GM23248 (cell line): ENCODE measurements at regions of chr1 and their contacts with region 1.

Region 1: DNA sequence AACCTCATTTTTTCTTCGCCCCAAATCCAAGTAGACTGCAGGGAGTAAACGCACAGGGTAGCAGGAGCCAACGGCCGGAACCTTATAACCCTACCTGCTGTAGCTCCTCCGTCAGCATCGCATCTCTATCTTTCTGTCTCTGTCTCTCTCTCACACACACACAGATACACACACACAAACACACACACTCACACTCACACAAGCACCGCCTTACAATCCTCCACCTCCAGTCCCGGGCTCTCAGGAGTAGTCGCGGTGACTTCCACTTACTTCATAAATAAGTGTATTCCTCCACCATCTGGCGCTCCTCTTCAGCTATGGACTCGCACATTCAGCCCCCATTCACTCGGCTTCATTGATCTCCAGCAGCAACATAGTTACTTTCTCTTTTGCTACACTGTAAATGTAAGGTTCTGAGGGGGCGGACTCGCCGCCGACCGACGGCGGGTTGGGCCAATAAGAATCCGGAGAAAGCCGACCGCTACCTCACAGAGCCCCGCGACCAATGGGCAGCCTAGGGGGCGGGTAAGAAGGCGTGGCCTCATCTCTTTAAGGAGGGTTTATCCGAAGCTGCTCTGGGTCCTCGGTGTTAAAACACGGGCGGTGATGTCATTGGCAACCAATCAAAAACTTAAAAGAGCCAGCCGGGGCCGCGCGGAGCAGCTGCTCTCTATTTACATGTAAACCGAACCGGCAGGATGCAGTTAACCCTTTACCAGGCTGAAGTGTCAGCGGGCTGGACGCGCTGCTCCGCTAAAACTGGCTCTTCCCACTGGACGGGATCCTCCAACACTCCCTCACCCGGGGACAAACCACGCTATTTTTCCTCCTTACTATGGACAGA is at the start of gene DUSP10:
- DNase-seq: peak; percentile 100
- H3K4me3 ChIP-seq: peak within 1 kb of the TSS; percentile 94
- H3K27ac ChIP-seq: peak within 1 kb of the TSS; percentile 84
- H3K4me1 ChIP-seq: peaks cover 14% of the 10 kb centered on the region; the same call in 1 of the 2 replicates
- H3K27me3 ChIP-seq: no peaks in the 10 kb centered on the region
- total RNA-seq, gene DUSP10: 10.5 and 19.3 TPM in 2 replicates

Region 2: DNA sequence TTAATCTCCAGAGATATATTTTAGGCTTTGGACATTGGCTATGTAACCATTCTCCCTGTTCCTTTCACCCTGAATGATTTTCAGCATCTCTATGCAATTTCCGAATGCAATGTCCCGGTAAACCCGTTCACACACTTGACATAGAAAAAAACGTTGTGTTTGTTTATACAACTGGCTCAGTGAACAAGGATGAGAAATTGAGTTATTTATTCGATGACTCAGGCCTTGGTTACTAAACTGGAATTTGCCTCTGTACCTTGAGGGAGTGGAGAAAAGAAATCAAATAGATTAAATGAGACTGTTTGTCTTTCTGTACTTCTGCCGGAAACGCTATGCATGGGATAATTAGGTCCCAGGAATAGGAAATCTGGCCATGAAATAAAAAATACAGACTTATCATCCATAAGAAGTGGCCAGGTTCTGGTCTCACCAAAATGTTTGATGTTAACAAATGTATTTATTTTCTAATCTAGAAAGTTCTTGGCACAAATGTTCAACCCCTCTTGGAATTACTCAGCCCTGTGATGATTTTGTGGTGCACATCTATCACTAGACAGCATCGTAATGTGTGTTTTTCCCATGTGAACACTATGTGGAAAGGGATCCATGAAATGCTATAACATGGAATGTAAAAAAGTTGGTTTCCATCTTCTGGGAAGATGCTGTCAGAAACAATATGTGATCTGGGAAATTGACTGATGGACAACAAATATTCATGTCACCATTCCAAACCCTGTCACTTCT is 254.0 kb before region 1 on chr1:
- in situ Hi-C with region 1: loop called (anchors 10 kb)
- DNase-seq: peak; percentile 68
- H3K4me3 ChIP-seq: no peak overlapping the region
- H3K27ac ChIP-seq: no peak overlapping the region
- H3K4me1 ChIP-seq: peaks cover 9% of the 10 kb centered on the region
- H3K27me3 ChIP-seq: no peaks in the 10 kb centered on the region

Region 3: DNA sequence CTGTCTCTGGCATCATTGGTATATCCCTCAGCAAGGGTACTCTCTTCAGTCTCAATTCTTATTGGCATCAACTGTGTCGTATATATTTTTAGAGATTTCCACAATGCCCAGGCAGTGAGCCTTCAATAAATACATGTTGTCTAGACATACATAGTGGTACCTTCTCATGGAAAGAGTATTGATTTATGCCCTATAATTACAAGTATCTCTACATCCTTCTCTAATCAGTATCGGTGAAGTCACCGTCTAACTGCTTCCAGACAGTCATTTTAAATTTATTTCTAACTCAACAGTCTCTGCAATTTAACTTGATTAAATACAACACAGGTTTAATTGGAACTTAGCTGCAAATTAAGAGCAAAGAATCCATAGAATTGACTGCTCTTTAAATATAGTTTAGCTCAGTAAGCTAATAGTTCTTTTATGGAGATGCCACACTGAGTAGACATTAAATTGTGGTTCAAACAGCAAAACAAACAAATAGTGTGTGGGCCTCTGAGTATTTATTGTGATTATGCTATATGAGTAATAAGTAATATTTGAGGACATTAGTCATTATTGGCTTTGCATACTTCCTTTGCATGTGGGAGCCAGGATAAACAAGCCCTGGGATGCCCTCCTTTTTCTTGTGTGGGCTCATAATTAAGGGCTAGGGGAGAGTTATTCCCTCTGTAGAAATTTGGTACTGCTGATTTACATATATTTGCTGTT is 126.8 kb after region 1 on chr1:
- in situ Hi-C with region 1: loop called (anchors 10 kb)
- DNase-seq: peak; percentile 88
- H3K4me3 ChIP-seq: peak overlapping the region; percentile 48
- H3K27ac ChIP-seq: peak overlapping the region; percentile 91
- H3K4me1 ChIP-seq: peaks cover 41% of the 10 kb centered on the region
- H3K27me3 ChIP-seq: no peaks in the 10 kb centered on the region

Region 4: DNA sequence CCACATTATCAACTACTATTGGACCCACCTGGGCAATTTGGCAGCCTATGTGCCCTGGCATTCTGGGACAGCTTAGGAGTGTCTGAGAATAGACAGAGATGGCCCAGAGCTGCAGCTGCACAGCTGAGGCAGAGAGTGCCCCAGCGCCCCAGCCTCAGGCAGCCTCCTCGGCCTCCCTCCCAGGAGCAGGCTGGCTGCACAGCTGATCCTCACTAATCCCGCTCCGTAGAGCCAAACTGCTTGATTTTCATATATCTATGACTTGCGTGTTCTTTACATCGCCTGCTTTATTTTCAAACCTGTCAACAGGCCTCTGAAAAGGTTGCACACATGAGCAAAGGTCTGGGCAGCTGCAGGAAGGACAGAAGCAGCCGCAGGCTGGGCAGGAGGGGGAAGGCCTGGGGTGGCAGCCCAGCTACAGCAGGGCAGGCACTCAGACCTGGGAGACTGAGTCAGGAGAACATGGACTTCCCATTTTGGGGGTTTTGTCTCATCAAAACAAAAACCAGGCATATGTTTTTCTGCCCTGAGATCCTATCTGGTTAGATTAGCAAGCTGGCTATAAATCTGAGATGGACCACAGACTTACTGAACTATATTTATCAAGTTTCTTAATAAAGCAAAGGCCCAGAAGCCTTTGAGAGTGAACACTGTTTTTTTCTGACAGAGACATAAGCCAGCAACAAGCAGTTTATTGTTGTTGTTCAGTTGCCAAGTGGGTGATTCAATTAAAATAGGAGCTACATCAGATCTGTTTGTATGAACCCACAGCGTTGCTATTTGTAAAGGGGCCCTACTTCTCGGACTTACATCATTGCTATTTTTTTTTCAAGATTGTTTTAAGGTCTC is 301.7 kb after region 1 on chr1:
- in situ Hi-C with region 1: no loop called
- DNase-seq: peak; percentile 93
- H3K4me3 ChIP-seq: no peak overlapping the region
- H3K27ac ChIP-seq: peak overlapping the region; percentile 70
- H3K4me1 ChIP-seq: peaks cover 26% of the 10 kb centered on the region
- H3K27me3 ChIP-seq: no peaks in the 10 kb centered on the region

Region 5: GRCh38 chr1:222167111-222167510 is 425.2 kb after region 1 on chr1:
- in situ Hi-C with region 1: loop called (anchors 10 kb)
- DNase-seq: peak; percentile 98
- H3K4me3 ChIP-seq: 0 out of 2 replicates have a peak overlapping the region, but pooled peaks have one; percentile 2
- H3K27ac ChIP-seq: peak overlapping the region; percentile 75
- H3K4me1 ChIP-seq: peaks cover 22% of the 10 kb centered on the region
- H3K27me3 ChIP-seq: no peaks in the 10 kb centered on the region

Region 6: DNA sequence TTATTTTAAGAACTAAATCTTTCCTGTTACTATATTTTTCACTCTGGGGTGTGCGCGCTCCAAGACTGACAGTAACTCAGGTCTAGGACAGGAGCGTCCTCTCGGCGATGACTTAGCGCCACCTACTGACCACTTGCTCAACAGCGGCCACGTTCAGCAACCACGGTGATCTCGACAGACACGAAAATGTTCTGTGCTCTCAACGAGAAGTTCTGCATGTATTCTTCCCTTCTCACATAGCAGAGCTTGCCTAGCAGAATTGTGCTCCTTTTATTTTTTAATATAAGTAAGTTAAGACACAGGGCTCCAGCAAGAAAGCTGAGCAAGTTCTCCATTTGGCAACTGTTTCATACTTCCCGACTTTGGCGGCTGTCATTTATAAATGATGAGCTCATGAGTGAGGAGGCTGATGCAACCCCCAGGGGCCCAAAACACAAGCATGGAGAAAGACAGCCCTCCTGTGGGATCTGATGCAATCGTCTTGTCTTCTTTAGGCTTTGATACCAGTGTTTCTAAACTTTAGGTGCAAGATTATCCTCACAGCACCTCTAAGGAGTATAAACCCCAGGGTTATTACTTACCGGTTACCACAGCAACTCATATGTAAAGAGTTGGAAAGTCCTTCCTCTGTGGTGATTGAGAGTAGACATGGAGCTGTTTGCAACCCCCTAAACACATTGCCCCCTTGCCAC is 713.4 kb after region 1 on chr1:
- in situ Hi-C with region 1: loop called (anchors 10 kb)
- DNase-seq: peak; percentile 92
- H3K4me3 ChIP-seq: peak overlapping the region; percentile 61
- H3K27ac ChIP-seq: peak overlapping the region; percentile 78
- H3K4me1 ChIP-seq: peaks cover 18% of the 10 kb centered on the region
- H3K27me3 ChIP-seq: no peaks in the 10 kb centered on the region